Naive thymus-derived CD8-positive, alpha-beta T cell (primary cell): ENCODE measurements at regions of chr12 and their contacts with region 1.

Region 1: DNA sequence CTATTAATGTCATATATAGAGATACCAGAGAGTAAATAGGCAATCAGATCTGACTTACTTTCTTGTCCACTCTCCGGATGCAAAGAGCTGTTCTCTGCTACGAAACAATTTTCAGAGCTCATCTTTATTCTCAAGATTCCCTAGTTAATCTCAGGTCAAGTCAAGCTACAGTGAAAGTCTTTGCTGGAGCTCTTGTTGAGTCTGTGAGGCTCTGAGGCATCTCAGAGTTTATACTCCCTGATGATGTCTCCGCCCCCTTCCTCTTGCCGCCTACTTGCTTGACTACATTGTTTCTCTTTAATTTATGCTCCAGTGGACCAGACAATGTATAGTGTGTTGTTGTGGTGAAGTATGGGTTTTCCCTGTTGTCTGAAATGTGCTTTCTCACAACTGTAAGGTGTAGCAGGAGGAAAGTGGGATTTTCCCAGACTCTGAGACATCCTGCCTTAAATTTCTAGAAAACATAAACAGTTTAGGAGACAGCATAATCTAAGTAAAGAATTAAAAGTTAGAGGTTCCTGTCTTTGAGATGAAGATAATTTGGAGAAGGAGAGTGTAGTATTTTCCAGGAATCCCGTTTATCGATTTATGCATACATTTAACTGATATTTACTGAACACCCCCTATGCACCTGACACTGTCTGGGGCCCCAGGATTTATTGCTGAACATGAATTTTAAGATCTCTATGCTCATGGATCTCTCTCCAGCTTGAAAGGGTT is at the start of gene CD69:
- DNase-seq: peak; percentile 52 to 92 (median 86)
- ATAC-seq: peak; percentile 49 to 64
- H3K4me3 Mint-ChIP-seq: peak within 1 kb of the TSS; percentile 87 to 99 (median 96)
- H3K27ac Mint-ChIP-seq: peak within 1 kb of the TSS; percentile 96 to 100 (median 99)
- H3K4me1 Mint-ChIP-seq: peaks cover 30 to 74% (median 59%) of the 10 kb centered on the region in 4 donors
- H3K27me3 Mint-ChIP-seq: no peaks in the 10 kb centered on the region
- polyA plus RNA-seq, gene CD69: 73.5 to 248 (median 87.9) TPM

Region 2: DNA sequence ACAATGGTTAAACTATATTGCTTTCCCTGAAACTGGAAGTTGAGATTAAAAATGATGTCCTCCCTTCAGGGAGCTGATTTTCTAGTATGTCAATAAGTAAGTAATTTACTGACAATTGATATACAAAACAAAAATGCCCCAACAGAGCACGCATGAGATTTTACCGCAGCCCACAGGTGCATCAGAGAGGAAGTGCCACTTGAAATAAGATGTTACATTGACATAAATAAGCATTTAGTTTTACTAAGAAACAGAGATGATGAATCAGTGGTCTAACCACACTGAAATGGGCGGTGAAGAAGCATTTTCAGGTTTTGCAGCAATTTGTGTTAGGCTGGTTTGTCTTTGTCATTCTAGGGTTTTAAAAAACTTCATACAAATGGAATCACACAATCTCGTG is 19.1 kb before region 1 on chr12:
- POLR2A ChIA-PET with region 1: interaction called, 47 read pairs
- DNase-seq: peak; percentile 30 to 94 (median 82)
- ATAC-seq: peak; percentile 76 to 80
- H3K4me3 Mint-ChIP-seq: peak overlapping the region; percentile 24 to 88 (median 76)
- H3K27ac Mint-ChIP-seq: peak overlapping the region; percentile 79 to 100 (median 98)
- H3K4me1 Mint-ChIP-seq: peaks cover 27 to 66% (median 63%) of the 10 kb centered on the region in 4 donors
- H3K27me3 Mint-ChIP-seq: no peaks in the 10 kb centered on the region

Region 3: GRCh38 chr12:9750276-9751203 is 10.3 kb before region 1 on chr12:
- POLR2A ChIA-PET with region 1: interaction called, 27 read pairs
- DNase-seq: peak; percentile 23 to 83 (median 59)
- ATAC-seq: peak; percentile 47 to 53
- H3K4me3 Mint-ChIP-seq: peak overlapping the region in 8 of 10 donors; percentile 57 to 81 (median 75)
- H3K27ac Mint-ChIP-seq: peak overlapping the region in 9 of 10 donors; percentile 39 to 97 (median 82)
- H3K4me1 Mint-ChIP-seq: peaks cover 14 to 44% (median 40%) of the 10 kb centered on the region in 4 donors
- H3K27me3 Mint-ChIP-seq: no peaks in the 10 kb centered on the region

Region 4: GRCh38 chr12:9797722-9798619 is 37.1 kb after region 1 on chr12:
- POLR2A ChIA-PET with region 1: interaction called, 84 read pairs
- DNase-seq: peak; percentile 18 to 89 (median 68)
- ATAC-seq: peak; percentile 97
- H3K4me3 Mint-ChIP-seq: peak overlapping the region in 1 of 10 donors; percentile 37
- H3K27ac Mint-ChIP-seq: peak overlapping the region in 4 of 10 donors; percentile 11 to 52 (median 36)
- H3K4me1 Mint-ChIP-seq: peaks cover 20 to 50% (median 43%) of the 10 kb centered on the region in 4 donors
- H3K27me3 Mint-ChIP-seq: no peaks in the 10 kb centered on the region

Region 5: DNA sequence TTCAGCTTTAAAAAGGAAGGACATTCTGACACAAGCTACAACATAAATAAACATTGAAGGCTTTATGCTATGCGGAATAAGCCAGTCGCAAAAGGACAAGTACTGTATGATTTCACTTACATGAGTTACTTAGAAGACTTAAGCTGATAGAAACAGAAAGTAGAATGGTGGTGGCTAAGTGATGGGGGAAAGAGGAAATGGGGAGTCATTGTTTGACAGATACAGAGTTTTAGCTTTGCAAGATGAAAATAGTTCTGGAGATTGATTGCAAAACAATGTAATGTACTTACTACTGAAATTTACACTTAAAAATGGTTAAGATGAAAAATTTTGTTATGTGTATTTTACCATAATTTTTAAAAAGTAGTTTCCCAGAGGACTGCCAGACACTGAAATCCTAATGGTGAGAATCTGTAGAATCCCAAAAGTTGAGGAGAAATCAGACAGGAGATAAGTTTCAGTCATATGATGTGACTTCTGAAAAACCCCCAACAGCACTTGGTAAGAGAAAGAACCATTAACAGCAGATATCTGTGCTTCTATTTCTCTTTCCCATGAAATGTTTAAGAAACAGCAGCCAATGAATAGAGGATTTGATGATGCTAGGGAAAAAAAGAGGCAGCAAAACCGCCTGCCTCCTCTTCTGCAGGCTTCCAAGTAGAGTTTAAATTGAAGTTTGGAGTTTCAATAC is 187.9 kb after region 1 on chr12:
- POLR2A ChIA-PET with region 1: no interaction called
- DNase-seq: peak in 2 of 10 donors; percentile 25 to 44
- ATAC-seq: peak; percentile 44 to 55
- H3K4me3 Mint-ChIP-seq: peak overlapping the region in 3 of 10 donors; percentile 0 to 5 (median 4)
- H3K27ac Mint-ChIP-seq: peak overlapping the region in 6 of 10 donors; percentile 0 to 65 (median 37)
- H3K4me1 Mint-ChIP-seq: peaks cover 21 to 55% (median 42%) of the 10 kb centered on the region in 4 donors
- H3K27me3 Mint-ChIP-seq: no peaks in the 10 kb centered on the region